MCF 10A (cell line): ENCODE measurements at regions of chr11 and their contacts with region 1.

Region 1: DNA sequence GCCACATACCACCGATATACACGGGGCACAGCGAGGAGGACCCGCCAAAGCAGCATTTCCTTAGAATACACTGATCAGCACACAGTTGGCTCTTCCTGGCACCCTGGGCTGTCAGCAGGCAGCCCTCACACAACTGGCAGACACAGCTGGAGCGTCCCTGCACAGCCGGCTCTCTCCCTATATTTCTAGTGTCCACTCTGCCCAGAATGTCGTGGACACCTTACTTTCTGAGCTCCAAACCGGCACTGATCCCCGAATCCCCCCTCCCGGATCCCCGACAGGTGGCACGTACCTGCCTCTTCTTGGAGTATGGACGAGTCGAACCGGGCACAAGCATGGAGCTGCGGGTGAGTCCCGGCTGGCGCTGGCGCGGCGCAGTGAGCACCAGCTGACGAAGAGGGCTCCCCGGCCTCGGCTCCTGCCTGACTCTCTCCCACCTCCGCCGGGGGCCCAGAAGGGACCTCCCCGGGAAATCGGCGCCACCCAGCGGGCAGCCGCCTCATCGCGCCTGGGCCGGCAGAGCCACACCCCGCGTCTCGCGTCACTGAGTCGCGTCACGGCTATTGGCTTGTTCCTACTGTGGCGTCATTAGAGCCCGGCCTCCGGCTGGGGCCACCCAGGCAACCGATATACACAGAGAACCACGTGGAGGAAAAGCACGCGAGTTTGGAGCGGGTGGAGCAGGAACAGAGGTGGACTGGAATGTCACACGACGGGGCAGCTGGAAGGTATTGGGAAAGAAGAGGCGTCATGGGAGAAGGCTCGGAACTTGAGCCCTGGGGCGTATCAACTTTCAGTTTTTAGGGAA is at the start of gene USP2:
- DNase-seq: peak; percentile 95
- H3K4me3 Mint-ChIP-seq: no peak within 1 kb of the TSS
- H3K27ac Mint-ChIP-seq: no peak within 1 kb of the TSS
- H3K4me1 Mint-ChIP-seq: peaks cover 10% of the 10 kb centered on the region
- H3K27me3 Mint-ChIP-seq: no peaks in the 10 kb centered on the region
- CTCF ChIP-seq: peak; percentile 72
- total RNA-seq, gene USP2: 0.14 and 0.54 TPM in 2 replicates

Region 2: DNA sequence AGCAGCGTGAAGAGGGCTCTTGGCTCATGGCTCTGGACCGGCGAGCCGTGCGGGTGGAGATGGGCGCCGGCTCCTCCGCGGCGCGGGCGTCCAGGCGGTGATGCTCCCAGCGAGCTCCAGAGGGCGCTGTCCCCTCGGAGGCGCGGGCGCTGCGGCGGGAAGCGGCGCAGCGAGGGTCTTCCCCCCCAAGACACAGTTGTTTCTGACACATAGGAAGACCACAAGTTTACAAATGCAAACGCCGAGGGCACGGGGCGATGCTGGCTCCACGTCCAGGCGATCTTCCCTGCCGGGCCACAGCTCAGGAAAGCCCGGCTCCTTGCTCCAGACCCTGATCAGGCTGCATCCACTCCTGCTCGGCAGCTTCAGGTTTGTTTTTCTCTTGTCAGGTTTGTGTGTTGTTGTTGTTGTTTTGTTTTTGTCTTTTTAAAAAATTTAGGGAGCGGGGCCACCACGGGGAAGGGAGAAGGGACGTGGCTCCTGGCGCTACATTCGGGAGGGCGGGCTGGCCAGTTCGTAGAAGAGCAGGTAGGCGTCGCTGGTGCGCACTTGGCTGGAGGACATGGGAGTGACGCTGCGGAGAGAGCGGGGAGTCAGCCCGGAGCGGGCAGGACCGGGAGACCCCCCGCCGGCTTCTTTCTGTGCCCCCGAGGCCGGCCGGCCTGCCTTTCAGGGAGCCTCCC is 24.9 kb before region 1 on chr11:
- CTCF ChIA-PET with region 1: interaction called, 415 read pairs
- POLR2A ChIA-PET with region 1: interaction called, 85 read pairs
- intact Hi-C with region 1: no loop called
- DNase-seq: peak; percentile 80
- H3K4me3 Mint-ChIP-seq: peak overlapping the region; percentile 79
- H3K27ac Mint-ChIP-seq: no peak overlapping the region
- H3K4me1 Mint-ChIP-seq: peaks cover 41% of the 10 kb centered on the region
- H3K27me3 Mint-ChIP-seq: no peaks in the 10 kb centered on the region
- CTCF ChIP-seq: peak; percentile 92

Region 3: DNA sequence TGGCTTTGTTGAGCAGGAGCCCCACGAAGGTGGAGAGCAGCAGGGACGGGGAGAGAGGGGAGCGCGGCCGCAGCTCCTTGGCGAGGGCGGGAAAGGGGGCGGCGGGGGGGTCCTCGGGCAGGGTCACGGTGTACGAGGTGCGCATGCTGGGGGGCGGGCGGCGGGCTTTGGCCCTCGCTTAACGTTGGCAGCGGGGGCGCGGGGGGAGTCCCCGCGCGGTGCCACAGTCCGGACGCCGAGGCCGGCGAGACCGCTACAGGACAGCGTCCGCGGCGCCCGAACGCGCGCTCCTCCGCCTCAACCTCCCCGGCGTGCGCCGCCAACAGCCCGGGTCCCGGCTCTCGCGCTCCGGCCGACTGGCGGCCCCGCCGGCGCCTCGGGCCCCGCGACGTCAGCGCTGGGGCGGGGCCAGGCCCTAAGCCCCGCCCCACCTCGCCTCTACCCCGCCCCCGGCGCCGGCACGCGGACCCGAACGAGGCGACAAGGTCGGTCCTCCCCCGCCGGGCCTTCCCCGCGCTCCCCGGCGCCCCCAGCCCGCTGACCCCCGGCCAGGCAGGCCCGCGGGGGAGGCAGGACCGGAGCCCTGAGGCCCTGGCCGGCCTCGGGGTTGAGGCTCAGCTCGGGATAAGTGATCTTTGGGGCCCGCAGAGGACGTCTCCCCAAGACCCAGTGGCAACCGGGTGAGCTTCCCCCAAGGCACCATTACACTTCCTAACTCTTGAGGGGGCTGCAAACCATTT is 17.4 kb before region 1 on chr11:
- CTCF ChIA-PET with region 1: interaction called, 415 read pairs
- POLR2A ChIA-PET with region 1: interaction called, 85 read pairs
- intact Hi-C with region 1: no loop called
- DNase-seq: no peak
- H3K4me3 Mint-ChIP-seq: no peak overlapping the region
- H3K27ac Mint-ChIP-seq: no peak overlapping the region
- H3K4me1 Mint-ChIP-seq: peaks cover 73% of the 10 kb centered on the region
- H3K27me3 Mint-ChIP-seq: no peaks in the 10 kb centered on the region
- CTCF ChIP-seq: no peak

Region 4: GRCh38 chr11:119432484-119433357 is 51.3 kb after region 1 on chr11:
- CTCF ChIA-PET with region 1: interaction called, 3 read pairs
- POLR2A ChIA-PET with region 1: interaction called, 4 read pairs
- intact Hi-C with region 1: loop called (anchors 2 kb)
- DNase-seq: peak; percentile 58
- H3K4me3 Mint-ChIP-seq: peak overlapping the region; percentile 60
- H3K27ac Mint-ChIP-seq: no peak overlapping the region
- H3K4me1 Mint-ChIP-seq: peaks cover 37% of the 10 kb centered on the region
- H3K27me3 Mint-ChIP-seq: no peaks in the 10 kb centered on the region
- CTCF ChIP-seq: no peak

Region 5: DNA sequence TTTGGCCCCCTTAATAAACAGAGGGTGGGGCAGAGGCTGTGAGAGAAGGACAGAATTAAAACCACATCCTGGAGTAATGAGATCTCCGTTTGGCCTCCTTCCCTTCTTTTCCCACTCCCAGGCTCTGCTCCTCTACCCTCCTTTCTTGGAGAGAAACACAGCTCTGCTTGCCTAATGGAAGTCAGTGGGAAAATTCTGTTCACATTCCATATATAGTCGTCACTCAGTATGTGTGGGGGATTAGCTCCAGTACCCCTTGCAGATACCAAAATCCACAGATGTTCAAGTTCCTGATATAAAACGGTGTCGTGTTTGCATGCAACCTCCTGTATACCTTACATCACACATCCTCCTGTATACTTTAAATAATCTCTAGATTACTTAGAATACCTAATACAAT is 79.2 kb after region 1 on chr11:
- CTCF ChIA-PET with region 1: no interaction called
- POLR2A ChIA-PET with region 1: no interaction called
- intact Hi-C with region 1: no loop called
- DNase-seq: peak; percentile 5
- H3K4me3 Mint-ChIP-seq: no peak overlapping the region
- H3K27ac Mint-ChIP-seq: no peak overlapping the region
- H3K4me1 Mint-ChIP-seq: no peaks in the 10 kb centered on the region
- H3K27me3 Mint-ChIP-seq: no peaks in the 10 kb centered on the region
- CTCF ChIP-seq: no peak

Region 6: DNA sequence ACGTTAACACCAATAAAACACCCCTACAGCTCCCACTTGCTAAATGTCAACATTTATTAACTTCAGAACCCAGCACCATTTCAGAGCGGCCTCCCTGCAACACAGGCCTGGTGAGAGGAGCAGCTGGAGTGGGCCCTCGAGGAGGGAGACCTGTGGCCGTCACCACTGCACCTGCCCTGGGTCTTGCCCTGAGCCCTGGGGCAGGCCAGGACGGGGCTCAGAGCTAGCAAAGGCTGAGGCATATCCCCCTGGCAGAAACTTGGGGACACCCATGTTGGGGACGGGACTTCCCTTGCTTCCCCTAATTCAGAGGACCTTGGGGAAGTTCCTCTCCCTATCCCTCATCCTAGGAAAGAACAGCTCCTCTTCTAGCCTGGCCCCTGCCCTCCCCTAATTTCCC is 178.9 kb after region 1 on chr11:
- CTCF ChIA-PET with region 1: no interaction called
- POLR2A ChIA-PET with region 1: no interaction called
- intact Hi-C with region 1: no loop called
- DNase-seq: no peak
- H3K4me3 Mint-ChIP-seq: no peak overlapping the region
- H3K27ac Mint-ChIP-seq: no peak overlapping the region
- H3K4me1 Mint-ChIP-seq: no peaks in the 10 kb centered on the region
- H3K27me3 Mint-ChIP-seq: peaks cover 37% of the 10 kb centered on the region
- CTCF ChIP-seq: no peak